Ovary (tissue), 10 donors: ENCODE measurements at regions of chr11 and their contacts with region 1.

Region 1: DNA sequence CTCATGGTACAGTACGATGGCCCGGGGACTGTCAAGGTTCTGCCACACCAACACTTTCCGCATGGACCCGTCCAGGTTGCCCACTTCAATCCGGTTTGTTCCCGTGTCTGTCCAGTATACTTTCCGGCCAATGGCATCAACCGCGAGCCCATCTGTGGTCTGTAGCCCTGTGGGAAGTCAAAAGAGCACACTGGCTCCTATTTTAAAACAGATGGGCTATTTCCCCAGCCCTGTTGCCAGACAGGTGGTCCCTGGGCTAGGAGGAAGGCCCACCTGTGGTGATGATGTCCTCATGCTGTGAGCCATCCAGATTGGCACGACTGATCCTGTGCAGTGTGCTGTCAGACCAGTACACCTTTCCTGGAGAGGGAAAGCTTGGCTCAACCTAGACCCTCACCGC is 30.4 kb upstream of the CKAP5 start:
- DNase-seq: no peak
- H3K4me3 ChIP-seq: no peak overlapping the region
- H3K27ac ChIP-seq: no peak overlapping the region
- H3K4me1 ChIP-seq: no peaks in the 10 kb centered on the region
- H3K27me3 ChIP-seq: no peaks in the 10 kb centered on the region
- CTCF ChIP-seq: no peak
- EP300 ChIP-seq: no peak
- POLR2A ChIP-seq: no peak

Region 2: DNA sequence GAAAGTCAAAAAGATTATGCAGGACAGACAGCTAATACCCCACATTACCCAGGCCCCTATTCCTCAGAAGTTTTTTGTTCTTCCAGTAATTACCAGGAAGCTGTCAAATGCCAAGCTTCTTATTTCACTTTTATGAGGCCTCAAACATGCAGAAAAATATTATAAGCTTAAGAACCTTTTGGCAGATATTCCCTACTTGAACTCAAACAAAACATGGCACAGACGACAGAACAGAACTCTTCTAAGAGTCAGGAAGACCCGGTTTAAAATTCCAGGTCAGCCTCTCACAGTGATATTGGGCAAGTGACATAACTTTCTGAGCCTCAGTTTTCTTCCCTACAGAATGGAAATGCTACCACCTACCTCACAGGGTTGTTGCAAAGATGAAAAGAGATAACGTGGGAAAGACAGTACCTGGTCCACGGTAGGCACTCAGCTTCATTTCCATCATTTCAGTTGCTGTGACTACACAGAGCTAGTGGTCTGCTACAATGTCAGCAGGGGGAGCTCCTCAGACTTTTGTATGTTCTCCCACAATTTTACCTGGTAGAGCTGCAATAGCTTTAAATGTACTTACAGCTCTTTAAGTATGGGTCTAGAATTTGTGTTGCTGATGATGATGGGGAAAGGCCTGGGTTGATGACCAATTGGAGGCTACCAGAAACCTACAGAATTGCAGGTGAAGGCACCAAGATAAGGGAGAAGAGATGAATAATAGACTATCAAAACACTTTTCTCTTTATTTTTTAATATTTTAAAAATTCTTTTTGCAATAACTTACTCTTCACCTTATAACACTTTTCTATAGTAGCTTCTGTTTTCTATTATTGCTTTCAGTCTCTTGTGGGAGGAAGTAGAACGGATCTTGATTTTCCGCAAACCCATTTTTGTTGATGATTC is 386.6 kb before region 1 on chr11:
- intact Hi-C with region 1: no loop called
- DNase-seq: no peak
- H3K4me3 ChIP-seq: no peak overlapping the region
- H3K27ac ChIP-seq: no peak overlapping the region
- H3K4me1 ChIP-seq: peaks cover 2% of the 10 kb centered on the region
- H3K27me3 ChIP-seq: no peaks in the 10 kb centered on the region
- CTCF ChIP-seq: no peak
- EP300 ChIP-seq: no peak
- POLR2A ChIP-seq: no peak

Region 3: GRCh38 chr11:46826310-46827044 is 50.0 kb before region 1 on chr11:
- intact Hi-C with region 1: loop called in 1 of 4 experiments (anchors 2 kb)
- DNase-seq: peak; percentile 76 to 87 (median 82)
- H3K4me3 ChIP-seq: peak overlapping the region; percentile 36
- H3K27ac ChIP-seq: peak overlapping the region in 1 of 2 donors; percentile 38
- H3K4me1 ChIP-seq: peaks cover 5% of the 10 kb centered on the region
- H3K27me3 ChIP-seq: no peaks in the 10 kb centered on the region
- CTCF ChIP-seq: peak in 2 of 3 donors; percentile 17 to 20
- EP300 ChIP-seq: no peak
- POLR2A ChIP-seq: no peak

Region 4: DNA sequence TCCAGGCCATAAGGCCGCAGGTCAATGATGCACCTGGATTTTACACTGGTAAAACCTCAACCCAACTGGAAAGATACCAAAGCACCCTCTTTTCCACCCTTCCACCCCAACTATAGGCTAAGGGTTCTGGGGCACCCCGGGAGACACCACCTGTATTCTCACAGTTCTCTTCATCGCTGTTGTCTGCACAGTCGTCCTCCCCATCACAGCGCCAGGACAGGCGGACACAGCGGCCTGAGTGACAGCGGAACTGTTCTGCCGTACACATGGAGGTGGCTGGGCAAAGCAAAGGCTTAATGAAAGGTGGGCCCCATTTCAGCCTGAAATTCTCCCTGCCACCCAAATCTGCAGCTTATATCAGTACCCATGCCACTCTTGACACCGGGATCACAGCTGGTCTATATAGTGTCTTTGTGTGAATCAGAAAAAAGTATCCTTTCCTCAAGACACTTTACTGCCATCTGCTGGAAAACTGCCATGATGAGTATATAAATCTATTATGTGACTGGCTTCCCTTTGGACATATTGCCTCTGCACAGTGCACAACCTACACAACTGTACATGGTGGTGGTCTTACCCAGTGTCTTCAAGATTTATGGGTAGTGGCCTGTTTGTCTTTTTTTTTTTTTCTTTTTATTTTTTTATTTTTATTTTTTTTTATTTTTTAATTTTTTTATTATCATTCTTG is 20.4 kb after region 1 on chr11:
- intact Hi-C with region 1: no loop called
- DNase-seq: no peak
- H3K4me3 ChIP-seq: no peak overlapping the region
- H3K27ac ChIP-seq: no peak overlapping the region
- H3K4me1 ChIP-seq: no peaks in the 10 kb centered on the region
- H3K27me3 ChIP-seq: no peaks in the 10 kb centered on the region
- CTCF ChIP-seq: no peak
- EP300 ChIP-seq: no peak
- POLR2A ChIP-seq: no peak